ENCODE measurements at regions of chr3 and their contacts with region 1.

Region 1: GRCh38 chr3:189041482-189042090 is 130.2 kb upstream of the TPRG1 start:
- DNase-seq: peak; percentile 33 to 74 (median 70)
- ATAC-seq: peak; percentile 97
- H3K4me3 ChIP-seq: no peak overlapping the region
- H3K4me3 Mint-ChIP-seq: peak overlapping the region in 1 of 10 donors; percentile 61
- H3K27ac ChIP-seq: no peak overlapping the region
- H3K27ac Mint-ChIP-seq: peak overlapping the region in 3 of 9 donors; percentile 9 to 71 (median 41)
- H3K4me1 ChIP-seq: no peaks in the 10 kb centered on the region
- H3K4me1 Mint-ChIP-seq: peaks cover 0 to 52% (median 4%) of the 10 kb centered on the region in 7 donors
- H3K27me3 ChIP-seq: no peaks in the 10 kb centered on the region
- H3K27me3 Mint-ChIP-seq: no peaks in the 10 kb centered on the region

Region 2: GRCh38 chr3:187802928-187803259 is 1238.7 kb before region 1 on chr3:
- CTCF ChIA-PET with region 1: no interaction called
- POLR2A ChIA-PET with region 1: no interaction called
- intact Hi-C with region 1: loop called in 1 of 2 experiments (anchors 2 kb)
- DNase-seq: peak in 1 of 9 donors; percentile 66
- ATAC-seq: peak; percentile 56
- H3K4me3 ChIP-seq: no peak overlapping the region
- H3K4me3 Mint-ChIP-seq: peak overlapping the region in 6 of 10 donors; percentile 14 to 69 (median 34)
- H3K27ac ChIP-seq: no peak overlapping the region
- H3K27ac Mint-ChIP-seq: peak overlapping the region in 1 of 9 donors; percentile 90
- H3K4me1 ChIP-seq: peaks cover 22 to 47% of the 10 kb centered on the region in 2 donors
- H3K4me1 Mint-ChIP-seq: peaks cover 23 to 93% (median 44%) of the 10 kb centered on the region in 7 donors
- H3K27me3 ChIP-seq: no peaks in the 10 kb centered on the region
- H3K27me3 Mint-ChIP-seq: no peaks in the 10 kb centered on the region

Region 3: DNA sequence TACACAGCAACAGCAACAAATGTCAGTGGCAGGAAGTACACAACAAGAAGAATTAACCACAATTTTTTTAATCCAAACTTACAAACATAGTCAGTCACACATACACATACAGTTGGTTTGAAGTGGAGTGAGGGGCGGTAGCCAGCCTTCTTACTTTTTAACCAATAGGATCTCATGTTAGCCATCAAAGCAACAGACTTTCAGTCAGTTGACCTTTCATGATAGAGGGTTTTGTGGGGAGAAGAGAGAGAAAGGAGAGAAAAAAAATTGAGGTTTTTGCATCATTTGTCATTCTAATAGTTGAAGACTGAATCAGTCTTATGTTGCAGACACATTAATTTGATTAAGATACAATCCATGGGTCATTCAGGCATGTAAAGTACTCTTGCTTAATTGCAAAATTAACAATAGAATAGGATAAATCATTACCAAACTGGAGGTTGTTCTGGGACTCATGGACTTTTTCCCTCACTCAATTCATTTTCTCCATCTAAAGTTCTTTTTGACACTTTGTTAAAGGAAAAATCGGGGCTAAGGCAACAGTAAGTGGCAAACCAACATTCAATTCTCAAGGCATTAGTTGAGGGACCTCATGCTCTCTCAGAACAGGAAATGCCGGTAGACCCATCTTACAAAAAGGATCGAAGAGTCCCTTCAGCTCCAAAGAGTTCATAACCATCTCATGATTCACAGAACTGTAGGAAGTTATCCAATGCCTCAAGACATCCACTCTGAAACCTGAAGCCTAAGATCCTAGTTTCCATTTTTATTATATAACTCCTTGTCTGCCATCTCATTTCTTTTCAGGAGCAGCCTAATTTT is 1047.2 kb before region 1 on chr3:
- CTCF ChIA-PET with region 1: no interaction called
- POLR2A ChIA-PET with region 1: no interaction called
- intact Hi-C with region 1: loop called in 1 of 2 experiments (anchors 10 kb)
- DNase-seq: peak in 2 of 9 donors; percentile 25 to 36
- ATAC-seq: peak; percentile 84
- H3K4me3 ChIP-seq: no peak overlapping the region
- H3K4me3 Mint-ChIP-seq: peak overlapping the region in 9 of 10 donors; percentile 4 to 77 (median 59)
- H3K27ac ChIP-seq: no peak overlapping the region
- H3K27ac Mint-ChIP-seq: peak overlapping the region in 7 of 9 donors; percentile 3 to 90 (median 48)
- H3K4me1 ChIP-seq: peaks cover 32 to 37% of the 10 kb centered on the region in 2 donors
- H3K4me1 Mint-ChIP-seq: peaks cover 36 to 77% (median 65%) of the 10 kb centered on the region in 7 donors
- H3K27me3 ChIP-seq: no peaks in the 10 kb centered on the region
- H3K27me3 Mint-ChIP-seq: no peaks in the 10 kb centered on the region

Region 4: GRCh38 chr3:188788621-188789081 is 252.9 kb before region 1 on chr3:
- CTCF ChIA-PET with region 1: no interaction called
- POLR2A ChIA-PET with region 1: no interaction called
- intact Hi-C with region 1: loop called in 1 of 2 experiments (anchors 10 kb)
- DNase-seq: peak in 8 of 9 donors; percentile 33 to 77 (median 64)
- ATAC-seq: peak; percentile 94
- H3K4me3 ChIP-seq: no peak overlapping the region
- H3K4me3 Mint-ChIP-seq: no peak overlapping the region
- H3K27ac ChIP-seq: no peak overlapping the region
- H3K27ac Mint-ChIP-seq: no peak overlapping the region
- H3K4me1 ChIP-seq: peaks cover 9 to 14% of the 10 kb centered on the region in 2 donors
- H3K4me1 Mint-ChIP-seq: peaks cover 0 to 10% (median 0%) of the 10 kb centered on the region in 7 donors
- H3K27me3 ChIP-seq: no peaks in the 10 kb centered on the region
- H3K27me3 Mint-ChIP-seq: no peaks in the 10 kb centered on the region

Region 5: GRCh38 chr3:188819939-188820338 is 221.6 kb before region 1 on chr3:
- CTCF ChIA-PET with region 1: no interaction called
- POLR2A ChIA-PET with region 1: no interaction called
- intact Hi-C with region 1: no loop called
- DNase-seq: no peak
- ATAC-seq: peak; percentile 50
- H3K4me3 ChIP-seq: no peak overlapping the region
- H3K4me3 Mint-ChIP-seq: no peak overlapping the region
- H3K27ac ChIP-seq: no peak overlapping the region
- H3K27ac Mint-ChIP-seq: no peak overlapping the region
- H3K4me1 ChIP-seq: no peaks in the 10 kb centered on the region
- H3K4me1 Mint-ChIP-seq: peaks cover 0 to 9% (median 0%) of the 10 kb centered on the region in 7 donors
- H3K27me3 ChIP-seq: no peaks in the 10 kb centered on the region
- H3K27me3 Mint-ChIP-seq: no peaks in the 10 kb centered on the region

Region 6: GRCh38 chr3:188954590-188955208 is 86.9 kb before region 1 on chr3:
- CTCF ChIA-PET with region 1: interaction called, 3 read pairs
- POLR2A ChIA-PET with region 1: no interaction called
- intact Hi-C with region 1: loop called (anchors 2 kb)
- DNase-seq: peak; percentile 35 to 80 (median 63)
- ATAC-seq: peak; percentile 83
- H3K4me3 ChIP-seq: no peak overlapping the region
- H3K4me3 Mint-ChIP-seq: no peak overlapping the region
- H3K27ac ChIP-seq: no peak overlapping the region
- H3K27ac Mint-ChIP-seq: no peak overlapping the region
- H3K4me1 ChIP-seq: no peaks in the 10 kb centered on the region
- H3K4me1 Mint-ChIP-seq: peaks cover 0 to 30% (median 0%) of the 10 kb centered on the region in 7 donors
- H3K27me3 ChIP-seq: no peaks in the 10 kb centered on the region
- H3K27me3 Mint-ChIP-seq: peaks cover 0 to 5% (median 0%) of the 10 kb centered on the region in 5 donors

Region 7: GRCh38 chr3:189132231-189132707 is 90.7 kb after region 1 on chr3:
- CTCF ChIA-PET with region 1: interaction called, 4 read pairs
- POLR2A ChIA-PET with region 1: interaction called, 5 read pairs
- intact Hi-C with region 1: loop called (anchors 1 kb)
- DNase-seq: peak in 8 of 9 donors; percentile 20 to 76 (median 62)
- ATAC-seq: peak; percentile 96
- H3K4me3 ChIP-seq: peak overlapping the region; percentile 26
- H3K4me3 Mint-ChIP-seq: peak overlapping the region; percentile 39 to 83 (median 71)
- H3K27ac ChIP-seq: peak overlapping the region; percentile 22
- H3K27ac Mint-ChIP-seq: peak overlapping the region; percentile 43 to 98 (median 79)
- H3K4me1 ChIP-seq: peaks cover 13 to 34% of the 10 kb centered on the region in 2 donors
- H3K4me1 Mint-ChIP-seq: peaks cover 13 to 38% (median 23%) of the 10 kb centered on the region in 7 donors
- H3K27me3 ChIP-seq: no peaks in the 10 kb centered on the region
- H3K27me3 Mint-ChIP-seq: no peaks in the 10 kb centered on the region

Region 8: DNA sequence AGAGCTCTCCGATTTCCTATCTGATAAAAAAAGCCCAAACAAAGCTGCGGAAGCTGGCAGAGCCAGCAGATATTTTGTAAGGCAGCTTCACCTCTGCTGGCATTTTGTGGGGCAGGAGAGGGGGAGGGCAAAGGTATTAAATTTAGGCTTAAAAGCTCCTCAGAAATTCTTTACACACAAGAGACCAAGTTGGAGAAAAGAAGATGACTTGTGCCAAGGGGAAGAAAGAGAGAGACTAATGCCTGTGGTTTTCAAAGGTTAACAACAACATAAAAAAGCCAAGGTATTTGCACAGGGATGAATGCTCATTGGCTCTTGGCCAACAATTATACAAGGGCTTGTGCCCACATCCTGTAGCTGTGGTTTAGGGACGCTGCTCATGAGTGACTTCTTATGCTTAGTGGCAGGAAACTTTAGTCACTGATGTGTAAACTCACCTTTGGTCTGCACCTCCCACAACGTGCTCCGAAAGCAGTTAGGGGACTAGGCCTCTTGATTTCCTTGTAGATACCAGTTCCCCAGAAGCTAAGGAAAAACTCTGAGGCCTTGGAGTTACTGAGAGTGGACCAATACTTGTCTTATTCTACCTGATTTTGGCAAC is 283.1 kb after region 1 on chr3:
- CTCF ChIA-PET with region 1: no interaction called
- POLR2A ChIA-PET with region 1: no interaction called
- intact Hi-C with region 1: loop called in 1 of 2 experiments (anchors 5 kb)
- DNase-seq: peak; percentile 15 to 96 (median 94)
- ATAC-seq: peak; percentile 98
- H3K4me3 ChIP-seq: peak overlapping the region; percentile 21
- H3K4me3 Mint-ChIP-seq: peak overlapping the region; percentile 72 to 87 (median 82)
- H3K27ac ChIP-seq: peak overlapping the region; percentile 51
- H3K27ac Mint-ChIP-seq: peak overlapping the region; percentile 86 to 100 (median 94)
- H3K4me1 ChIP-seq: peaks cover 33 to 46% of the 10 kb centered on the region in 2 donors
- H3K4me1 Mint-ChIP-seq: peaks cover 27 to 80% (median 73%) of the 10 kb centered on the region in 7 donors
- H3K27me3 ChIP-seq: no peaks in the 10 kb centered on the region
- H3K27me3 Mint-ChIP-seq: peaks cover 0 to 4% (median 0%) of the 10 kb centered on the region in 5 donors